ENCODE measurements at regions of chrX and their contacts with region 1.

Region 1: GRCh38 chrX:24371391-24371972 is 11.0 kb downstream of the SUPT20HL1 start:
- DNase-seq: peak; percentile 78
- H3K4me3 Mint-ChIP-seq: peak overlapping the region; percentile 56
- H3K27ac Mint-ChIP-seq: no peak overlapping the region
- H3K4me1 Mint-ChIP-seq: peaks cover 8% of the 10 kb centered on the region
- H3K27me3 Mint-ChIP-seq: peaks cover 3% of the 10 kb centered on the region

Region 2: DNA sequence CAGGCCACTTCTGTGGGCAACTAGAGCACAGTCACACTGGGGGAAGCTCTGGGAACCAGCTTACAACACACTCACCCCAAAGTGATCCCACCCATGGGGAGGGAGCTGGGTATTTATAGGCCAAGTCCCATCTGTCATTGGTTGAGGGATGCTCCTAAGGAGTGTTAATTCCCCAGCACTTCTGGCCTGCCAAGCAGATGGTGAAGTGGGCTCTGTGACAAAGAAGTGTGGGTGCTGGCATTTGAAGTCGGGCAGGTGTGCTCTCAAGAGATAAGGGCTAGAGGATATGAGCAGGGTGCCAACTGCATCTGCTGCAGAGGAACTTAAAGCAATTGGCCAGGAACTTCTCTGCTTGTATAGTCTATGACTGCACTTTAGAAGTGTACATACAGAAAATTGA is 1005.9 kb before region 1 on chrX:
- CTCF ChIA-PET with region 1: no interaction called
- intact Hi-C with region 1: no loop called
- DNase-seq: no peak
- H3K4me3 Mint-ChIP-seq: no peak overlapping the region
- H3K27ac Mint-ChIP-seq: no peak overlapping the region
- H3K4me1 Mint-ChIP-seq: no peaks in the 10 kb centered on the region
- H3K27me3 Mint-ChIP-seq: peaks cover 4% of the 10 kb centered on the region

Region 3: GRCh38 chrX:24259544-24260240 is 111.8 kb before region 1 on chrX:
- CTCF ChIA-PET with region 1: interaction called, 28 read pairs
- intact Hi-C with region 1: loop called (anchors 1 kb)
- DNase-seq: peak; percentile 52
- H3K4me3 Mint-ChIP-seq: no peak overlapping the region
- H3K27ac Mint-ChIP-seq: no peak overlapping the region
- H3K4me1 Mint-ChIP-seq: peaks cover 14% of the 10 kb centered on the region
- H3K27me3 Mint-ChIP-seq: no peaks in the 10 kb centered on the region

Region 4: GRCh38 chrX:24395775-24396174 is 24.3 kb after region 1 on chrX:
- CTCF ChIA-PET with region 1: interaction called, 14 read pairs
- intact Hi-C with region 1: no loop called
- DNase-seq: peak; percentile 58
- H3K4me3 Mint-ChIP-seq: no peak overlapping the region
- H3K27ac Mint-ChIP-seq: no peak overlapping the region
- H3K4me1 Mint-ChIP-seq: no peaks in the 10 kb centered on the region
- H3K27me3 Mint-ChIP-seq: no peaks in the 10 kb centered on the region

Region 5: DNA sequence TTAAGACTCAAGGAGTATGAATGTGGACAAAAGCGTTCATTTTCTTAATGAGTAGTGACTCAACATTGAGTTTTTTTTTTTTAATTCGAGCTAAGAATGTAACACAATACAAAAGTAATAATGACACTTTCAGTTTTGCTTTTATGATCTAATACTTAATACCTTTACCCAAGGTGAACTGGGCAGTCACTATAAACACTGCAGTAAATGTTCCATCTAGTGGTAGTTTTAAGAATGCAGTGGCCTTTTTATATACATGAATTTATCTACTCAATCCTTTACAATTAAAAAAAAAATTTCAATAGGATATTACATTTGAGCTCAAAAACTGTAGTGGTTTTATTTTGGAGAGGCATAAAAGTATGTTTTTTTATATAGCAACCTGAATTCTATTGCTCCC is 127.5 kb after region 1 on chrX:
- CTCF ChIA-PET with region 1: interaction called, 33 read pairs
- intact Hi-C with region 1: loop called (anchors 1 kb)
- DNase-seq: no peak
- H3K4me3 Mint-ChIP-seq: no peak overlapping the region
- H3K27ac Mint-ChIP-seq: no peak overlapping the region
- H3K4me1 Mint-ChIP-seq: peaks cover 24% of the 10 kb centered on the region
- H3K27me3 Mint-ChIP-seq: no peaks in the 10 kb centered on the region

Region 6: GRCh38 chrX:24561121-24561520 is 189.6 kb after region 1 on chrX:
- CTCF ChIA-PET with region 1: interaction called, 4 read pairs
- intact Hi-C with region 1: loop called (anchors 1 kb)
- DNase-seq: no peak
- H3K4me3 Mint-ChIP-seq: no peak overlapping the region
- H3K27ac Mint-ChIP-seq: no peak overlapping the region
- H3K4me1 Mint-ChIP-seq: no peaks in the 10 kb centered on the region
- H3K27me3 Mint-ChIP-seq: no peaks in the 10 kb centered on the region

Region 7: GRCh38 chrX:25015486-25016360 is 644.2 kb after region 1 on chrX and contains the start of gene ARX:
- CTCF ChIA-PET with region 1: interaction called, 3 read pairs
- intact Hi-C with region 1: loop called (anchors 10 kb)
- DNase-seq: peak; percentile 41
- H3K4me3 Mint-ChIP-seq: no peak within 1 kb of the TSS
- H3K27ac Mint-ChIP-seq: no peak within 1 kb of the TSS
- H3K4me1 Mint-ChIP-seq: peaks cover 13% of the 10 kb centered on the region
- H3K27me3 Mint-ChIP-seq: peaks cover 53% of the 10 kb centered on the region
- total RNA-seq, gene ARX: not detected

Region 8: GRCh38 chrX:25144043-25144940 is 772.8 kb after region 1 on chrX:
- CTCF ChIA-PET with region 1: interaction called, 4 read pairs
- intact Hi-C with region 1: loop called (anchors 1 kb)
- DNase-seq: peak; percentile 51
- H3K4me3 Mint-ChIP-seq: no peak overlapping the region
- H3K27ac Mint-ChIP-seq: no peak overlapping the region
- H3K4me1 Mint-ChIP-seq: no peaks in the 10 kb centered on the region
- H3K27me3 Mint-ChIP-seq: peaks cover 2% of the 10 kb centered on the region